Gastrocnemius medialis (tissue), 4 donors: ENCODE measurements at regions of chr17 and their contacts with region 1.

Region 1: GRCh38 chr17:44363613-44364159 is at the start of gene FAM171A2:
- DNase-seq: no peak
- ATAC-seq: peak; percentile 79 to 84
- H3K4me3 ChIP-seq: peak within 1 kb of the TSS; percentile 47 to 79 (median 60)
- H3K27ac ChIP-seq: no peak within 1 kb of the TSS
- H3K4me1 ChIP-seq: peaks cover 4 to 12% of the 10 kb centered on the region in 2 donors
- H3K27me3 ChIP-seq: peaks cover 8 to 17% (median 15%) of the 10 kb centered on the region in 3 donors
- CTCF ChIP-seq: peak in 4 of 5 experiments; percentile 45 to 91 (median 80)
- POLR2A ChIP-seq: no peak
- total RNA-seq, gene FAM171A2: 0.10 to 0.47 (median 0.23) TPM in 3 of 4 donors, not detected in the other

Region 2: GRCh38 chr17:44522883-44523671 is 159.4 kb after region 1 on chr17:
- in situ Hi-C with region 1: no loop called
- intact Hi-C with region 1: loop called (anchors 1 kb)
- DNase-seq: peak; percentile 53 to 76
- ATAC-seq: peak; percentile 88 to 96
- H3K4me3 ChIP-seq: no peak overlapping the region
- H3K27ac ChIP-seq: no peak overlapping the region
- H3K4me1 ChIP-seq: no peaks in the 10 kb centered on the region
- H3K27me3 ChIP-seq: no peaks in the 10 kb centered on the region
- CTCF ChIP-seq: peak; percentile 69 to 86 (median 85)
- POLR2A ChIP-seq: no peak